ENCODE measurements at regions of chr18 and their contacts with region 1.

Region 1: DNA sequence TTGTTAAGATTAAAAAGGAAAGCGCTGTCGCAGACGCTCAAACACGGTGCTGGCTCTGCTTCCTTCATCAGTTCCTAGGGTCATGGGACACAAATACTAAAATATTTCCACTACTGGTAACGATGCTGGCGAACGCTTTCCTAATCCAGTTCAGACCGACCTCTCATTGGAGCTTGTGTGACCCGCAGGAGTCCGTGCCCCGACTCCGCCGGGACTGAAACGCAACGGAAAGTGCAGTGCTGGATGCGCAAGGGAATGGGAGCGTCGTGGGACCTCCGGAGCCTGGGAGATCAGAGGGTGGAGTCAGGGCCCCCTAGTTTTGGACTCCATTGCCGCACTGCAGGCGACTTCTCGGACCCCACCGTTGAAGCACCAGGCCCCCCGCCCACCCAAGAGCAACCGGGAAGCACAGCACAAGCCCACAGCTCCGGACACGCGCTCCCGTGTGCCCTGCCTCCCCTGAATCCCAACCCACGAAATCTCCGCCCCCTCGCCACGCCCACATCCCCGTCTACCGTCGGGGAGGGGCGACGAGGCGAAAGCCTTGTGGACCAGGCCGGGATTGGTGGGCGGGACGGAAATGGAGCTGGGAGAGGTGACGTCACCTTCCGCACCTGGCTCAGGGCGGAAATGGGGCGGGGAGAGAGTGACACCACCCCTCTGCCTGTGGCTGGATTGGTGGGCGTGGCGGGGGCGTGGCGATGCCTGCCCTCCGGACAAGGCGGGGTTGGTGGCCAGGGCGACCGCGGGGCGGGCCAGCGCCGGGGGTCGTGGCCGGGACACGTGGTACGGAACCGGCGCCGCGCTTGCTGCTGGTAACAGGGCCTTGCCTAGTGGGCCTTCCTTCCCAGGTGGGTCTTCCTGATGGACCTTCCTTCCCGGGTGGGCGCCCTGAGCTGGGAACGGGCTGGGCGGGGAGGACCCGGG is at the start of gene CNDP2:
- DNase-seq: peak; percentile 97
- H3K4me3 ChIP-seq: peak within 1 kb of the TSS; percentile 70
- H3K4me3 Mint-ChIP-seq: peak within 1 kb of the TSS; percentile 93
- H3K27ac Mint-ChIP-seq: peak within 1 kb of the TSS; percentile 93
- H3K4me1 ChIP-seq: no peaks in the 10 kb centered on the region
- H3K4me1 Mint-ChIP-seq: no peaks in the 10 kb centered on the region
- H3K27me3 ChIP-seq: no peaks in the 10 kb centered on the region
- H3K27me3 Mint-ChIP-seq: no peaks in the 10 kb centered on the region
- CTCF ChIP-seq: no peak
- total RNA-seq, gene CNDP2: 95.1 and 113 TPM in 2 replicates

Region 2: GRCh38 chr18:74353169-74353775 is 142.6 kb before region 1 on chr18:
- CTCF ChIA-PET with region 1: interaction called, 27 read pairs
- POLR2A ChIA-PET with region 1: interaction called, 4 read pairs
- intact Hi-C with region 1: loop called (anchors 1 kb)
- DNase-seq: peak; percentile 39 to 45
- H3K4me3 ChIP-seq: no peak overlapping the region
- H3K4me3 Mint-ChIP-seq: no peak overlapping the region
- H3K27ac Mint-ChIP-seq: no peak overlapping the region
- H3K4me1 ChIP-seq: no peaks in the 10 kb centered on the region
- H3K4me1 Mint-ChIP-seq: no peaks in the 10 kb centered on the region
- H3K27me3 ChIP-seq: no peaks in the 10 kb centered on the region
- H3K27me3 Mint-ChIP-seq: no peaks in the 10 kb centered on the region
- CTCF ChIP-seq: peak; percentile 44 to 73

Region 3: DNA sequence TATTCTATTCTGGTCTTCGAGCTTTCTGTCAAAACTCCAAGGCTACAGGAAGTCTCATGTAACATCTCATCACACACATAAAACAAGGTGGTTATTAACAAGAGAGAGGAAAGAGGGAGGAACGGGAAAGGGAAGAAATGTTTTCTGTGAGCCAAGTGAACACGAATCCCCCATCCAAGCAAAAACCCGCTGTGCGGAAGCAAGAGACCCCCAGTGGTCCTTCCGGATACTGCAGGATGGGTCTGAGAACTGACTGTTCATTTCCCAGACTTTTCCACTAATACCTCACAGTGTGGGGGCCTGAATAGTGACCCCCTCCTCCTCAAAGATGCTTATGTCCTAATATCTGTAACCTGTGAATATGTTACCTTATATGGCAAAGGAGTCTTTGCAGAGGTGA is 19.7 kb before region 1 on chr18:
- CTCF ChIA-PET with region 1: no interaction called
- POLR2A ChIA-PET with region 1: no interaction called
- intact Hi-C with region 1: loop called (anchors 2 kb)
- DNase-seq: peak in 1 of 2 experiments; percentile 47
- H3K4me3 ChIP-seq: no peak overlapping the region
- H3K4me3 Mint-ChIP-seq: no peak overlapping the region
- H3K27ac Mint-ChIP-seq: no peak overlapping the region
- H3K4me1 ChIP-seq: peaks cover 8% of the 10 kb centered on the region; the same call in 1 of the 2 replicates
- H3K4me1 Mint-ChIP-seq: peaks cover 6% of the 10 kb centered on the region
- H3K27me3 ChIP-seq: no peaks in the 10 kb centered on the region
- H3K27me3 Mint-ChIP-seq: no peaks in the 10 kb centered on the region
- CTCF ChIP-seq: peak; percentile 49 to 56

Region 4: GRCh38 chr18:74541703-74542555 is 46.1 kb after region 1 on chr18:
- CTCF ChIA-PET with region 1: no interaction called
- POLR2A ChIA-PET with region 1: interaction called, 6 read pairs
- intact Hi-C with region 1: loop called (anchors 2 kb)
- DNase-seq: peak; percentile 83 to 91
- H3K4me3 ChIP-seq: no peak overlapping the region
- H3K4me3 Mint-ChIP-seq: no peak overlapping the region
- H3K27ac Mint-ChIP-seq: no peak overlapping the region
- H3K4me1 ChIP-seq: peaks cover 26% of the 10 kb centered on the region
- H3K4me1 Mint-ChIP-seq: no peaks in the 10 kb centered on the region
- H3K27me3 ChIP-seq: no peaks in the 10 kb centered on the region
- H3K27me3 Mint-ChIP-seq: no peaks in the 10 kb centered on the region
- CTCF ChIP-seq: no peak